ENCODE measurements at regions of chr2 and their contacts with region 1.

Region 1: GRCh38 chr2:9770308-9771100 is 72.8 kb upstream of the TAF1B start:
- DNase-seq: peak; percentile 82 to 91
- ATAC-seq: peak; percentile 67 to 85
- H3K4me3 ChIP-seq: no peak overlapping the region
- H3K27ac ChIP-seq: peak overlapping the region; percentile 54 to 79; a peak in 5 of 6 replicates
- H3K4me1 ChIP-seq: peaks cover 25% of the 10 kb centered on the region
- CTCF ChIP-seq: peak; percentile 82
- EP300 ChIP-seq: no peak
- POLR2A ChIP-seq: no peak
- RAD21 ChIP-seq: peak; percentile 72 to 75

Region 2: DNA sequence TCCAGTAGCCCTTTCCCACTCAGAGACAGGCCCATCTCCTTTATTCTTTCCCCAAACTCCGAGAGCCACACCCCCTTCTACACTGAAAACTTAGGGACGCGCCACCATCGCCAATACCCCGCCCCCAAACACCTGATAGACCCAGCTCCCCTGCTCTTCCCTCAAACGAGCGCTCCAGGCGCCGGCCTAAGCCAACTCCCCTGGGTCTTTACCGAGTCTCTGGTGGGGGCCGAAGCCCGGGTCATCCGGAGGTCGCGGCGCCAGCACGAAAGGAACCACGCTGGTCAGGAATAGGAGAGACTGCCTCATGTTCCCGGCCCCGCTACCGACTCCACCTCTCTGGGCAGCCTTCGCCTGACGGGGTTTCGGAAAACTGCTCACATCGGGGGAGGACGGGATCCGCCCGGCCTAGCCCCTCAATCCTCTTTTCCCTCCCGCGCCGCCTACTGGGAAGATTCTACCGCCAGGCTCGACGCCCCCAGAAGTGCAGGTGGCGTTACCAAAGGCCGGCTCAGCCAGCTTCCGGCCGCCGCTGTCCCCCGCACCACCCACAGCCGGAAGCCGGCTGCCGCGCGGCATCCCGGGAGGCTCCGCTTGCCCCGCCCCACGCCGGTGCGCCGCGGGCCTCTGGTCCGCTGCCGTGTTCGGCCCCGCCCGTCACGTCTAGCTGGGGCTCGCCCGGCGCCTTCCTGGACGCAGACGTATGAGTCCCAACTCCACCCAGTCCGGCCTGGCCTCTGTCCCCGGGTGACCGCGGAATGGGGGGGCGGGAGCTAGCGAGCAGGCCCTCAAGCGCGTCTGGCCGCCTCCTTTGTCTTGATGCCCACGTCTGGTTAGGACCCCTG is 215.0 kb before region 1 on chr2 and contains the start of gene ADAM17:
- CTCF ChIA-PET with region 1: interaction called, 13 read pairs
- POLR2A ChIA-PET with region 1: no interaction called
- DNase-seq: peak; percentile 84 to 98
- ATAC-seq: peak; percentile 90 to 92
- H3K4me3 ChIP-seq: peak within 1 kb of the TSS; percentile 78
- H3K27ac ChIP-seq: peak within 1 kb of the TSS; percentile 95 to 98
- H3K4me1 ChIP-seq: peaks cover 56% of the 10 kb centered on the region
- CTCF ChIP-seq: peak; percentile 58
- EP300 ChIP-seq: no peak
- POLR2A ChIP-seq: peak; percentile 87
- RAD21 ChIP-seq: peak; percentile 47 to 57; a peak in 4 of 5 replicates
- polyA plus RNA-seq, gene ADAM17: 33.0 and 33.1 TPM in 2 replicates

Region 3: GRCh38 chr2:9638532-9638931 is 132.0 kb before region 1 on chr2:
- CTCF ChIA-PET with region 1: interaction called, 53 read pairs
- POLR2A ChIA-PET with region 1: no interaction called
- DNase-seq: peak; percentile 79 to 89
- ATAC-seq: peak; percentile 89 to 92
- H3K4me3 ChIP-seq: no peak overlapping the region
- H3K27ac ChIP-seq: peak overlapping the region; percentile 70 to 79
- H3K4me1 ChIP-seq: peaks cover 45% of the 10 kb centered on the region
- CTCF ChIP-seq: no peak
- EP300 ChIP-seq: no peak
- POLR2A ChIP-seq: no peak
- RAD21 ChIP-seq: peak in 1 of 2 experiments; percentile 25; a peak in 1 of 5 replicates

Region 4: DNA sequence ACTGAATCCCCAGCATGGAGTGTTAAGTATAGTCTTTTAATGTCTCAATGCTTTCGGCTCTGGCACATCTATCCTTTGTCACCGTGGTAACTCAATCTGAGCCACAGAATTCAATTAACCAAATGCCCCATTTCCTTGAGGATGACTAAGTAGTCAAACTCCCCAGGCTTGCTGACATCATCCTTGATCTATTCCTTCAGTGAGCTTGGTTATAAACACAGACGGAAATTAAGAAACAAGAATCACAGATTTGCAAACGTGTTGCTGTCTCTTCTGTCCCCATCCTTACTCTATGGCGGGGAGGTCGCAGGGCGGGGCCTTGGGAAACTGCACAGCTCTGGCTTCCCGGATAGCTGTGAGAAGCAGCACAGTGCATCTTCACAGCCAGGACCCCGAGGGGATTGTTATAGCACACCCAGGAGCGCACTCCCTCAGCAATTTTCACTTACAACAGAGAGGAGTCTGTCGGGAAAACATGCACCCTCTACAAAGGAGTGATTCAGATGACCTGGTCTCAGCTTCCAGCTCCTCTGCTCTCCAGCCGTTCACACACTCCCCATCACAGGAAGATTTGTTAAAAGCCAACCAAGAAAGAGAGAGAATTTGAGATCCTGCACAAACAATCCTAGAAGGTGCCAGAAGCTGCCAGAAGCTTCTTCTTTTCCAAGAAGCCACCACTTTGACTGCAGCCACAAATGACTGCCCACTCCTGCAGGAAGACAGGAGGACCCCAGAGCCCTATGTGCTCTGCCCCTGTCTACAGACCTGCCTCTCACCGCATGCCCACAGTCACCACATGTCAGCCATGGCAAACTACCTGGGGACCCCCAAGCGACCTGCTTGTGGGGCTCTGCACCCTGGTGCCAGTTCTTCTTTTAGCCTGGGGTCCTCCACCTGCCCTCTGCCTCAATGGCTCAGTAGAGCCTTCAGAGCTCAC is 94.8 kb before region 1 on chr2:
- CTCF ChIA-PET with region 1: interaction called, 23 read pairs
- POLR2A ChIA-PET with region 1: no interaction called
- DNase-seq: peak; percentile 65 to 83
- ATAC-seq: peak; percentile 88 to 89
- H3K4me3 ChIP-seq: peak overlapping the region; percentile 19; the same call in 2 of the 3 replicates
- H3K27ac ChIP-seq: peak overlapping the region; percentile 79 to 85
- H3K4me1 ChIP-seq: peaks cover 30% of the 10 kb centered on the region
- CTCF ChIP-seq: no peak
- EP300 ChIP-seq: no peak
- POLR2A ChIP-seq: no peak
- RAD21 ChIP-seq: 0 out of 5 replicates have a peak, but pooled peaks of 1 of the 2 experiments have one; percentile 22

Region 5: GRCh38 chr2:9714630-9715214 is 55.8 kb before region 1 on chr2:
- CTCF ChIA-PET with region 1: interaction called, 15 read pairs
- POLR2A ChIA-PET with region 1: no interaction called
- DNase-seq: no peak
- ATAC-seq: peak; percentile 36 to 41; a peak in 3 of 6 replicates
- H3K4me3 ChIP-seq: no peak overlapping the region
- H3K27ac ChIP-seq: no peak overlapping the region; a peak in 1 of 6 replicates
- H3K4me1 ChIP-seq: no peaks in the 10 kb centered on the region
- CTCF ChIP-seq: no peak
- EP300 ChIP-seq: no peak
- POLR2A ChIP-seq: no peak
- RAD21 ChIP-seq: no peak

Region 6: DNA sequence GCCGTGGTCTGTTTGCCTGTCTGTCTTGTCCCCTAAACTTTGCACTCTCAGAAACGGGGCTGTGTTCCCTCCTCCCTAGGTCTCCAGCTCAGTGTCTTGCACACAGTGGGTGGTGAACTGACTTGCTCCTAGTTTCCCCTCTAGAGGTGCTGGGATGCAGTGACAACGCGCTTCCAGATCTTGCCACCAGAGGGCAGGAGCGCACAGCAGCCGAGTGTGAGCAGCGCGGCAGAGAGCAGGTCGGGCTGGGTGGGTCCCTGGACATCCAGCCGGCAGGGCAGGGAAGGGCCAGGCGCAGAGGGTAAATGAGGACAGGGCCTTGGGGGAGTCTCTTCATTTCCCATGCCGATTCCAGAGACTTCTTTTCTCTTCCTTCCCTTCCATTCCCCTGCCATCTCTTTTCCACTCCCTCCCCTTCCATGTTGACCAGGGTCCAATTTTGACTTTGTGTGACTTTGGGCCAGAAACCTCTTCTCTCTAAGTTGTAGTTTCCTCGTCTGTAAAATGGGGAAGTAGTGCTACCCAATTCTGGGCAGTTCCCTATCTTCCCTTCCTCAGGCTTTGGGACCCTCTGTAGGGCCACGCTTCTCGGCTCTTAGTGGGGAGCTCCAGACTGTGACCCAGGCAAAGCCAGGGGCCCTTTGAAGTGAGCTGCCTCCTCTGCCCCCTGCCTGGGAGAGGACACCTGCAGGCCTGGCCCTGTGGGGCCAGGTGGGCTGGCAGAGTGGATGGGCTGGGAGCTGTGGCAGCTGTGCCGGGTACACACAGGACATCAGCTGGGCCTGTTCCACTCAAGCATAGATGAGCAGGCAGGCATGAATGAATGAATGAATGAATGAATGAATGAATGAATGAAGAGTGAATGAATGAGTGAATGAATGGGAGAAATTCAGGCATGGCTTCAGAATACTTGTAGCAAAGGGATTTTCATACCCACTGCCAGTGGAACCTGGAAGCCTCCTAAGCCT is 29.4 kb after region 1 on chr2:
- CTCF ChIA-PET with region 1: interaction called, 202 read pairs
- POLR2A ChIA-PET with region 1: no interaction called
- DNase-seq: peak; percentile 85 to 93
- ATAC-seq: peak; percentile 75 to 92
- H3K4me3 ChIP-seq: no peak overlapping the region
- H3K27ac ChIP-seq: peak overlapping the region; percentile 34 to 87; a peak in 5 of 6 replicates
- H3K4me1 ChIP-seq: peaks cover 30% of the 10 kb centered on the region
- CTCF ChIP-seq: peak; percentile 98
- EP300 ChIP-seq: no peak
- POLR2A ChIP-seq: no peak
- RAD21 ChIP-seq: peak; percentile 92 to 97

Region 7: DNA sequence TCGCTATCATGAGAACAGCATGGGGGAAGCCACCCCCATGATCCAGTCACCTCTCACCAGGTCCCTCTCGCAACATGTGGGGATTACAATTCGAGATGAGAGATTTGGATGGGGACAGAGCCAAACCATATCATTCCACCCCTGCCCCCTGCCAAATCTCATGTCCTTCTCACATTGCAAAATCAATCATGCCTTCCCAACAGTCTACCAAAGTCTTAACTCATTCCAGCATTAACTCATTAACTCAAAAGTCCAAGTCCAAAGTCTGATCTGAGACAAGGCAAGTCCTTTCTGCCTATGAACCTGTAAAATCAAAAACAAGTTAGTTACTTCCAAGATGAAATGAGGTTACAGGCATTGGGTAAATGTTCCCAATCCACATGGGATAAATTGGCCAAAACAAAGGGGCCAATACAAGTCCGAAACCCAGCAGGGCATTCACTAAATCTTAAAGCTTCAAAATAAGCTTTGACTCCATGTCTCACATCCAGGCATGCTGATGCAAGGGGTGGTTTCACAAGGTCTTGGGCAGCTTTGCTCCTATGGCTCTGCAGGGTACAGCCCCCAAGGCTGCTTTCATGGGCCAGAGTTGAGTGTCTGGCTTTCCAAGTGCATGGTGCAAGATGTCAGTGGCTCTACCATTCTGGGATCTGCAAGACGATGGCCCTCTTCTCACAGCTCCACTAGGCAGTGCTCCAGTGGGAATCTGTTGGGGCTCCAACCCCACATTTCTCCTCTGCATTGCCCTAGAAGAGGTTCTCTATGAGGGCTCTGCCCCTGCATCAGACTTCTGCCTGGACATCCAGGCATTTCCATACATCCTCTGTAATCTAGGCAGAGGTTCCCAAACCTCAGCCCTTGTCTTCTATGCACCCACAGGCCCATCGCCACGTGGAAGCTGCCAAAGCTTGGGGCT is 87.6 kb after region 1 on chr2:
- CTCF ChIA-PET with region 1: no interaction called
- POLR2A ChIA-PET with region 1: no interaction called
- DNase-seq: peak in 1 of 2 experiments; percentile 18
- ATAC-seq: no peak
- H3K4me3 ChIP-seq: no peak overlapping the region
- H3K27ac ChIP-seq: no peak overlapping the region
- H3K4me1 ChIP-seq: no peaks in the 10 kb centered on the region
- CTCF ChIP-seq: no peak
- EP300 ChIP-seq: no peak
- POLR2A ChIP-seq: no peak
- RAD21 ChIP-seq: no peak

Measured in A549 (cell line).